ENCODE measurements at regions of chr20 and their contacts with region 1.

Region 1: GRCh38 chr20:32207626-32208498 is at the starts of genes PLAGL2 and POFUT1:
- DNase-seq: peak; percentile 88
- H3K4me3 Mint-ChIP-seq: peak within 1 kb of the TSS; percentile 98
- H3K27ac Mint-ChIP-seq: peak within 1 kb of the TSS; percentile 91
- H3K4me1 Mint-ChIP-seq: peaks cover 64% of the 10 kb centered on the region
- H3K27me3 Mint-ChIP-seq: no peaks in the 10 kb centered on the region
- total RNA-seq, gene PLAGL2: 125 and 126 TPM in 2 replicates
- total RNA-seq, gene POFUT1: 67.4 and 68.8 TPM in 2 replicates

Region 2: DNA sequence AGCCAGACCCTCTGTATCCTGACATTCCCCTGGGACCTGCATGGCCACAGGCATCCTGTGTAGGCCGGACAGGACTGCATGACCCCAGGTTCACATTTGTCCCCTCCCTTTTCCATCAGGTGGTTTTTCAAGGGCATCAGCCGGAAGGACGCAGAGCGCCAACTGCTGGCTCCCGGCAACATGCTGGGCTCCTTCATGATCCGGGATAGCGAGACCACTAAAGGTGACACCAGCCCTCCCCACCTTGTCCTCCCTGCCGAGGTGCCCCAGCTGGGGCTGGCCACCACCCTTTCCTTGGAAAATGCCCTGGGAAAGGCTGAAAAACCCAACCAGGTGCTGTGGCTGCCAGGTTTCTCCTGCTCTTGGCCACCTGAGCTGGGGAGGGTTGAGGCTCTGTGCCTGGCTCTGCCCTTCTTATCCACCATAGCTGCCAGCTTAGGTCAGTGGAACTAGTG is 128.2 kb before region 1 on chr20:
- intact Hi-C with region 1: no loop called
- DNase-seq: no peak
- H3K4me3 Mint-ChIP-seq: no peak overlapping the region
- H3K27ac Mint-ChIP-seq: no peak overlapping the region
- H3K4me1 Mint-ChIP-seq: no peaks in the 10 kb centered on the region
- H3K27me3 Mint-ChIP-seq: peaks cover 3% of the 10 kb centered on the region

Region 3: GRCh38 chr20:32231847-32232246 is 24.0 kb after region 1 on chr20:
- intact Hi-C with region 1: loop called (anchors 1 kb)
- DNase-seq: peak; percentile 20
- H3K4me3 Mint-ChIP-seq: peak overlapping the region; percentile 69
- H3K27ac Mint-ChIP-seq: peak overlapping the region; percentile 97
- H3K4me1 Mint-ChIP-seq: peaks cover 38% of the 10 kb centered on the region
- H3K27me3 Mint-ChIP-seq: no peaks in the 10 kb centered on the region

Region 4: GRCh38 chr20:32285621-32286371 is 77.9 kb after region 1 on chr20:
- intact Hi-C with region 1: loop called (anchors 1 kb)
- DNase-seq: peak; percentile 47
- H3K4me3 Mint-ChIP-seq: peak overlapping the region; percentile 60
- H3K27ac Mint-ChIP-seq: peak overlapping the region; percentile 84
- H3K4me1 Mint-ChIP-seq: peaks cover 60% of the 10 kb centered on the region
- H3K27me3 Mint-ChIP-seq: no peaks in the 10 kb centered on the region

Region 5: DNA sequence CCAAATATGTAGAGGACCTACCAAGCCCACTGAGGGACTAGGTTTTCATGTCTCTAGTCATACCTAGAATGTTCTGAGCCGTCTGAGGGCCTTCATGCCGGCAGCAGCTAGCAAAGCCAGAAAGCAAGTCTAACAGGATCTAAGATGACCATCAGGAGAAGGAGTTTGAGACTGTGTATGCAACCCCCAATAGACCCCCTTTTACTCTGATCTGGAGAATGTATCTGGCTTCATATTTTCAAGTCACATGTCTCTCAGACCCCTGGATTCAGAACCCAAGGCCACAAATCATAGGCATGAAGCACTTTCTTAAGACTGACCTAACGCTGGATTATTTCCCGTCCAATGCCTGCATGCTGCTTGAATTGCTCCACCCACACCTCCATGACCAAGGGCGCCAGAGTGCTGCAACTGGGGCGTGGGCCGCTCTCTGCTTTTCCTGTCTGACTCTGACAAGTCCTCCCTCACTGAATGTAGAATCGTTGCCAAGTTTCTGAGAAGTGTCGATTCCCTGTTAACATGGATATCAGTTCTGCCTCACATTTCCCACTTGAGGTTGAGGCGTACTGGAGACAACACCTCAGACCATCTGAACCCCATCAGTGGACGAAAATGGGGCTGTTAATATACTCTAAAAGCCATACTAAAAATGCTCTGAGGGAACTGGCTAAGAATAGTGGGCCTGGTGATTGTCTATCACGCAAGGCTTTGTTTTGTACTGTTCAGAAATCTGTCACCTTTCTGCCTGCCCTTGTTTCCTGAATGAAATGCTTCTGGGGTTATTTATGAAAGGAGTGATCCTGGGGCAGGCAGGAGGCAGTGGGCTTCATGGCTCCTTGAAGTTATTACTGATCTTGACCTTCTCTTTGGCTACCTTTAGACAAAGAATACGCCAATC is 126.4 kb after region 1 on chr20:
- intact Hi-C with region 1: loop called (anchors 1 kb)
- DNase-seq: no peak
- H3K4me3 Mint-ChIP-seq: peak overlapping the region; percentile 26
- H3K27ac Mint-ChIP-seq: peak overlapping the region; percentile 81
- H3K4me1 Mint-ChIP-seq: peaks cover 46% of the 10 kb centered on the region
- H3K27me3 Mint-ChIP-seq: no peaks in the 10 kb centered on the region

Region 6: DNA sequence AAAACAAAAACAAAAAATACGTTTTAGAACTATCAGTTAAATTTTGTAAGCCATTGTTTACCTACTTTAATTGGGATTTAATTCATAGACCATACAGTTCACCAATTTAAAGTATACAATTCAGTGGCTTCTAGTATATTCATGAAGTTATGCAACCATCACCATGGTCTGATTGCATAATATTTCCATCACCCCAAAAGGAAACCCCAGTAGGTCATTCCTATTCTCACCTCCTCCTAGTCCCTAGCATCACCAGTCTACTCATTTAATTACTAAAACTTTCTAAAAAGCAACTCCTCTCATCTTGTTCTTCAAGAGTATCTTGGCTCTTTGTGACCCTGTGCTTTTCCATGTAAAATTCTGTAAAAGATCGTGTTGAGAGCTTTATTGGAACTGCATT is 210.5 kb after region 1 on chr20:
- intact Hi-C with region 1: no loop called
- DNase-seq: no peak
- H3K4me3 Mint-ChIP-seq: no peak overlapping the region
- H3K27ac Mint-ChIP-seq: no peak overlapping the region
- H3K4me1 Mint-ChIP-seq: peaks cover 21% of the 10 kb centered on the region
- H3K27me3 Mint-ChIP-seq: no peaks in the 10 kb centered on the region

Region 7: DNA sequence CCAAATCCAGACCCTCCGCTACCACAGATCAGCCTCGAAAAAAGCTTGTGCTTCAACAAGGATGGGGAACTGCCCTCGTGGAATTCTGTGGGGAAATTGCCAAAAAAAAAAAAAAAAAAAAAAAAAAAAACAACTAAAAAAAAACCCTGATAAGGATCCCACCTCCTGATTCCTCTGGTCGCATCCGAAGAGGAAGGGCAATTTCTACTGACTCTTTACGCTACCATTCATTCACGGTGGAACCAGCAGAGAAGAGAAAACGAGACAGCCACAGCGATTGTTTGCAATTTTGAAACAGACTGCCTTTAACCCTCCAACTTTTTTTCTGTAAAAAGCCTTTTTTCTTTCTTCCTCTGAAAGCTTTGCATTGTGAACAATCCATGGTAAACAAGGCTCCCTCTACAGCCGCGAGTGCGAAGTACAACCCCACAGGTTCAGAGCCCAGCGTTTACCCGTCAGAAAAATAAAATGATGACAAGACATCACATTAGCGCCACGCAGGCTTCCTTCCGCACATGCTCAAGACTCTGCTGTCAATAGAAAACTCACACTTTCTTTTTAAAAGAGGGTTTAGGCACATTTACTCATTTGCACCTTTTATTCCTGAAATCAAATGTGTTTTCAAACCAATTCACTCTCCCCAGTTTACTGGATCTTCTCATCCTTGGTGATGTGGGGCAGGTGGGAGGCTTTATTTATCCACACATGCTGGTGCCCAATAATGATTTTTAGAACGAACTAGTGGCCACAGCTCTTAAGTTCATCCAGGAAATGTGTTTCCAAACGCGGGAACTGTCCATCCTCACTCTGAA is 277.3 kb after region 1 on chr20:
- intact Hi-C with region 1: loop called (anchors 5 kb)
- DNase-seq: peak; percentile 76
- H3K4me3 Mint-ChIP-seq: peak overlapping the region; percentile 89
- H3K27ac Mint-ChIP-seq: peak overlapping the region; percentile 85
- H3K4me1 Mint-ChIP-seq: peaks cover 9% of the 10 kb centered on the region
- H3K27me3 Mint-ChIP-seq: no peaks in the 10 kb centered on the region

Measured in activated T-helper 2 cell treated with anti-CD3 and anti-CD28 coated beads, Interferon-gamma antibody, Interleukin-2, Interleukin-4, amounts not matched to agents 10 μg/mL and 5 μg/mL and 100 μg/mL, durations not matched to agents 14 hours and 24 hours and 36 hours (primary cell).